ENCODE measurements at regions of chr4 and their contacts with region 1.

Region 1: DNA sequence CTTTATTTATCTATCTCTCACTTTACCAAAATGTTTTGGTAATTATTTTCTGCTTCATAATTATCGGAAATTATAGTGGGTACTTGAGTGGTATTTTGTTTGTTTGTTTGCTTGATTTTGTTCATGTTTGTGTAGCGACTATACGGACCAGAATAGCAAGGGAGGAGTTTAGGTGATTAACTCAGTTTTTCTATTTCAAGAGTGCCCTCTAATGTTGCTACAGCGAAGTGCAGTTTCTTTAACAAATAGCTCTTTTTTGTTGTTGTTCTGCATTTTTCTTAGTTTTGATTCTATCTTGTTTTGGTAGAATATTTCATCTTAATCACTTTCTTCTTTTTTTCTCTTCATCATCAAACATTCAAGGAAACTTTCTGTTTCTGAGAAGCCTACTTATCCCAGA is 40.8 kb upstream of the QRFPR start:
- DNase-seq: no peak
- H3K4me3 ChIP-seq: no peak overlapping the region
- H3K27ac ChIP-seq: no peak overlapping the region
- H3K4me1 ChIP-seq: no peaks in the 10 kb centered on the region
- CTCF ChIP-seq: peak; percentile 38

Region 2: GRCh38 chr4:121706595-121707021 is 285.0 kb after region 1 on chr4:
- CTCF ChIA-PET with region 1: interaction called, 14 read pairs
- POLR2A ChIA-PET with region 1: no interaction called
- intact Hi-C with region 1: no loop called
- DNase-seq: no peak
- H3K4me3 ChIP-seq: no peak overlapping the region
- H3K27ac ChIP-seq: no peak overlapping the region
- H3K4me1 ChIP-seq: no peaks in the 10 kb centered on the region
- CTCF ChIP-seq: no peak

Measured in OCI-LY7 (cell line).